BJ (cell line): ENCODE measurements at regions of chr1 and their contacts with region 1.

Region 1: DNA sequence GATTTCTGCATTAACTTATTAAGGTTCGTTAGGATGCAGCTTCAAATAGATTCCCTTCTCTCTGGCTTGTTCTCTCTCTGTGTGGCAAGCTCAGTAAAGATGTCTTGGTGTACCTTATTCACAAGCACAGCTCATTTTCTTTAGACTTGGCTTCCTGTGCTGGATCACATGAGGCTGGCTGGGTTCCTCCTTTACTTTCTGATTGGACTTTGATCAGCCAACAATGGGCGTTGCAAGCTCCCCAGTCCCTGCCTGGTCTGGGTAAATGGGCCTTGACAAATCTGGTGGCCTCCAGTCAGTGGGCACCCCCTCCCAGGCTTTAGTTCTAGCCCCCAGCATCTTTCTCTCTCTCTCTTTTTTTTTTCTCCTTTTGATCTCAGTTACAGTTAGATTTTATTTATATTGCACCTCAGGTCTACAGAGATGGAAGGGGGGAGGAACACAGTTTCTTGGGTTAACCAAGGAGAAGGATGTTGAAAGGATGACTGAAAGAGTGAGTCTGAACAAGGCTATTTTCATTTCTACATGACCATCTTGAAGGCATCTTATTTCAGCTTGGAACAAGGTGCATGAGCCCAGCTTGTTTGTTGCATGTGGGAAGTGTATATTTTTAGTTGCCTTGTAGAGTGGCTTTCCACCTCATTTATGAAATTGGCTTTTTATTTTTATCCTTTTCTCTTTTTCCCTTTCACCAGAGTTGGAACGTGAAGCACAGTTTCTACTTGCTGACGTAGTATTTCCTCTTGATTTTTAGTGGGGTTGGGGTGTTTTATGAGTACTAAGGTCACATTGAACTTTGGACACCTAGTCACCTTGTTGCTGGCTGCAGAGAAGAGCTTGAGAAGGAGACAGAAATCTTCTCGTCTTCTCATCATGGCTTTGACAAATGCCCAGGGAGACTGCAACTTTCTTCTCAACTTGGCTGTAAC is 77.1 kb downstream of the PBX1 start:
- DNase-seq: no peak
- H3K4me3 ChIP-seq: no peak overlapping the region
- H3K27me3 ChIP-seq: no peaks in the 10 kb centered on the region
- CTCF ChIP-seq: no peak

Region 2: DNA sequence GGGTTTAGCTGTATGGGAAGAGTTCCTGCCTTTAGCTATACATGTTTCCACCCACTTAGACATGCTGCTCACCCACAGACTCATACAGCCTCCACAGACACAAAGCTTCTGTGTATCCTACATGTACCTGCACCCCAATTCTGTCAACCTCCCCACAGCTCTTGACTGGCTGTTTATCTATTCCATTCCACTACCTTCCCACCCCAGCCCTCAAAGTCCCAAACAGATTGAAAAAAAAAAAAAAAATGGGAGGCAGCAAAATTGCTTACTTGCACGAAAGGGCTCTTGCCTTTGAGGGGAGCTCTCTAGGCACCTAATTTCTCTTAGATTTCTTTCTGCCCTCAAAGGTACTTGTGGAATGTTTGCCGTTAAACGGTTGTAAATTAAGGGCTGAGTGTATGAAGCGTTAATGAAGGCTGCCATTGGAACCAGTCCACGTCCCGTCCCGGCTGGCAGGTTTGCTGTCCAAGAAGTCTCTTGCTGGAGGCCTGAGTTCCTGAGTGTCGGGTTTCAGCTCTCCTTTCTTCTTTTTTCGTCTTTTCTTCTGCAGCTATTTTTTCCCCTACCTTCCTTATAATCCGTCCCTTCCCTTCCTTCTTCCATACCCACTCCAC is 33.5 kb before region 1 on chr1:
- CTCF ChIA-PET with region 1: no interaction called
- POLR2A ChIA-PET with region 1: no interaction called
- DNase-seq: peak; percentile 47
- H3K4me3 ChIP-seq: no peak overlapping the region
- H3K27me3 ChIP-seq: no peaks in the 10 kb centered on the region
- CTCF ChIP-seq: no peak

Region 3: GRCh38 chr1:164625001-164625617 is 11.0 kb before region 1 on chr1:
- CTCF ChIA-PET with region 1: interaction called, 14 read pairs
- POLR2A ChIA-PET with region 1: no interaction called
- DNase-seq: no peak
- H3K4me3 ChIP-seq: no peak overlapping the region
- H3K27me3 ChIP-seq: no peaks in the 10 kb centered on the region
- CTCF ChIP-seq: peak; percentile 44

Region 4: DNA sequence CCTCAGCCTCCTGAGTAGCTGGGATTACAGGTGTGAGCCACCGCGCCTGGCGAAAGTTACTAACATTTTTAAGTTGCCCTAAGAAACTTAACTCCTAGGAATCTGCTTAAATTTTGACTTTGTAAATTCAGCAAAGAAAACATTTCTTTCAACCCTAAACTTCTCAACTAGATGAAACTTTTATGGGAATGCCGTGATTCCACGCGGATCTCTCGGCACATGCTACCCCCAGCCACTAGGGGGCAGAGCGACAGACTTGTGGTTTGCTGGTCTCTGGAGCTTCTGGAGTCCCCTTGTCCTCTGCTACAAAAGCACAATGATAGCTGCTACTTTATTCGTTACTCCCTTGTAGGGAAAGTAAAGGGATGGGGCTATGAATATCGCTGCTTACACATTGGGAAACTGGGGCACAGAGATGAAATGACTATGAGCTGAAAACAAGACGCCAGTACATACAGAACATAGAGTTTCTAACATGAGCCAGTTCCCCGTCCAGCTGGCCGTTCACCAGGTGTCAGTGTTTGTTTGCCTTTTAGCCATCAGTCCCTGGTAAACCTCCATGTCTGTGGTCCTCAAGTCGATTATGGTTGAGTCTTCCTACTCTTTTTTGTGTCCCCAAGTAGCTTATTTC is 37.6 kb after region 1 on chr1:
- CTCF ChIA-PET with region 1: no interaction called
- POLR2A ChIA-PET with region 1: no interaction called
- DNase-seq: no peak
- H3K4me3 ChIP-seq: no peak overlapping the region
- H3K27me3 ChIP-seq: no peaks in the 10 kb centered on the region
- CTCF ChIP-seq: peak; percentile 56

Region 5: DNA sequence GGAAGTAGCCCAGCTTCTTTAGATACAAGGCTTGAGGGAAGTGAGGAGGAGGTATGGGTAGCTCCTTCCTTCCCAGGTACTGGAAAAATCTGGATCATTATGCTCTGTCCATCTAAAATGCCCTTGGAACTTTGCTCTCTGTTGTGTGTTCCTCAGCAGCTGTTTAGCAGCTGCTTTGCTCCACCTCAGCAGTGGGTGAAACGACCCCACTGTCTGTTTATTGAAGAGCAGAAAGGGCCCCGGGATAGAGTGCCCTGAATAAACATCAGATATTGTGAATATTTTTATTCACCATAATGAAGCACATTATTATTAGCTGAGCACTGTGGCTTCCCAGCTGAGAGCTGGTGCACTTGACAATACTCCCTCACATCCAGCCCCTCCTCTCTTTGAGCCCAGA is 160.8 kb after region 1 on chr1:
- CTCF ChIA-PET with region 1: no interaction called
- POLR2A ChIA-PET with region 1: no interaction called
- DNase-seq: no peak
- H3K4me3 ChIP-seq: no peak overlapping the region
- H3K27me3 ChIP-seq: no peaks in the 10 kb centered on the region
- CTCF ChIP-seq: no peak